Sigmoid colon (tissue), 7 donors: ENCODE measurements at regions of chr17 and their contacts with region 1.

Region 1: DNA sequence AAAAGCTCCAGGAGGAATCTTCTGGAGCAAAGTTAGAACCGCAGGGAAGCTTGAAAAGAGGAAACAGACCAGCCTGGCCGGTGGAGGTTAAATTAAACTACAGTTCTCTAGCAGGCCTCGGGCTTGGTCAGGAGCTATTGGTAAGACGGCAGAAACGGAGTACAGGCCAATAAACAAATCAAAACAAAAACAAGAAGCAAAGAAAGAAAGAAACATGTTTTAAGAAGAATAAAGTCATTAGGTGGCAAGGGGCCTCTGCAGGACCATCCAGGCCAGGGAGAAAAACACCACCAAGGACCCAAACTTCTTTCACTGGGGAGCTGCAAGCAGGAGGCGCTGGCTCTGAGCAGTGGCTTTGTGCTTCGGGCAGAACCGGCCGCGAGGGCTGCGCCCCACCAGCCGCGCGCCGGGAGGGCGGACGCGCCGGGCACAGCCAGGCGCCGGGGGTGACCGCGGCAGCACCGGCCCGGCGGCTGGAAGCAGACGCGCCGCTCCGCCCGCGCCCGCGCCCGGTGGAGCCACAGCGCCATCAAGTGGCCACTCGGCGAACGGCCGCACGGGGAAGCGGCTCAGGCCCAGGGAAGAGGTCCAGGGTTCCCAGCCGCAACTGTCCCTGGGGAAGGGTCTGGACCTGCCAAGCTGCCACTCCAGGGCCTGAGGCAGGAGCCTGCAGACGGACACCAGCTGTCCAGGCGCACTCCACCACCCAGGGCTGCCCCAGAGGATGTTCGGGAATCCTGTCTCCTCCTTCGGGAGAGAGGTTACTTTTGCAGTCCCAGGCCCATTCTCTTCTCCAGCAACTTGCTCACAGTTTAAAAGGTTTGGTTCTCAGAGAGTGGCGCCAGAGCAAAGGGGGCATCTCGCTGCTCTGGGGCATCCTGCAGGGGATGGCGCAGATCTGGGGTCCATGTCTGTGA is 419.4 kb downstream of the SOX9 start:
- DNase-seq: peak; percentile 77
- H3K4me3 ChIP-seq: peak overlapping the region in 2 of 4 donors; percentile 23 to 31
- H3K27ac ChIP-seq: no peak overlapping the region
- H3K4me1 ChIP-seq: peaks cover 0 to 10% (median 2%) of the 10 kb centered on the region in 4 donors
- H3K27me3 ChIP-seq: peaks cover 0 to 5% (median 0%) of the 10 kb centered on the region in 3 donors
- CTCF ChIP-seq: peak; percentile 69 to 89 (median 74)
- EP300 ChIP-seq: no peak
- POLR2A ChIP-seq: no peak

Region 2: DNA sequence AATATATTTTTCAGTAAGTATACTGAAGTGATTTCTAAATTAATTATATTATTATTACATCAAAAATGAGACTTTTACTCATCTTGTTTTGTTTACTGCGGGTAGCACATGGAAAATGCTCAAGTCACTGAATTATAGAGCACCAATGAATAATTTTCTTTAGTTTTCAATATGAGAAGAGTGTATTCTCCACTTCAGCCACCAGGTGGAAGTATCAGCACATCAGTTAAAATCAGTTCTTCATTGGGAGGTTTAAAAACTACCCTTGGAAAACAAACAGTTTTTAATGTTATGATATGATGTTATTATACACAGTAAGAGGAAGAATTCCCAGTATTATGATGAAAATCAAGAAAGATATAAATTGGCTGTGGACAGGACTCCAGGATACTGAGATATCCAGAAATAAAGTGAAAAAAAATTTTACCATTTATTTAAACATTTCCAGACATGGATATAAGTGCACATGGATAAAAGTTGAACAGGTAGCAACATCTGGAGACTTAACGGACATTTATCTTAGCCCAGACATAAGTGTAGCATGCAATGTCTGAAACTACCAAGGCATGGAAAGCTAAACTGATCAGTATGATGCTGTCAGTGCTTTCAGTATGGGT is 1903.6 kb before region 1 on chr17:
- intact Hi-C with region 1: loop called (anchors 2 kb)
- DNase-seq: no peak
- H3K4me3 ChIP-seq: no peak overlapping the region
- H3K27ac ChIP-seq: no peak overlapping the region
- H3K4me1 ChIP-seq: no peaks in the 10 kb centered on the region
- H3K27me3 ChIP-seq: no peaks in the 10 kb centered on the region
- CTCF ChIP-seq: peak; percentile 65 to 85 (median 78)
- EP300 ChIP-seq: no peak
- POLR2A ChIP-seq: no peak

Region 3: GRCh38 chr17:70767102-70767701 is 1773.0 kb before region 1 on chr17:
- intact Hi-C with region 1: loop called (anchors 1 kb)
- DNase-seq: no peak
- H3K4me3 ChIP-seq: no peak overlapping the region
- H3K27ac ChIP-seq: no peak overlapping the region
- H3K4me1 ChIP-seq: peaks cover 0 to 3% (median 0%) of the 10 kb centered on the region in 4 donors
- H3K27me3 ChIP-seq: no peaks in the 10 kb centered on the region
- CTCF ChIP-seq: peak; percentile 34 to 57 (median 48)
- EP300 ChIP-seq: no peak
- POLR2A ChIP-seq: no peak

Region 4: DNA sequence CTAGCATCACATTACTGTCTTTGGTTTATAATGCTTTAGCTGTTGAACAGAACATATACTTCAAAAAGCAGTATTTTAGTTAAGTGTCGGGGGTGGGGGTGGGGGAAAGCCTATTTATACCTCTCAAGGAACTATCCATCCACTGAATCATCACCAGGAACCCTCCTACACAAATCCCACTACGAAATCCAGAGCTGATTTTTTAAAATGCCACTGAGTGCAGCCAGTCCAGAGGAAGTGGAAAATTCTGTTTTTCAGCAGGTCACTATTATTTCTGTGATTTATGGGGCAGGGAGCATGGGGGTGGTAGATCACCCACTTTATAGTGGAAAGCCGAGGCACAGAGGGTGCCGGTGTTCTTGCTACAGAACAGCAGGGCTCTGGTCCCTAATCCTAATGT is 135.4 kb before region 1 on chr17:
- intact Hi-C with region 1: no loop called
- DNase-seq: no peak
- H3K4me3 ChIP-seq: no peak overlapping the region
- H3K27ac ChIP-seq: no peak overlapping the region
- H3K4me1 ChIP-seq: peaks cover 0 to 25% (median 20%) of the 10 kb centered on the region in 4 donors
- H3K27me3 ChIP-seq: no peaks in the 10 kb centered on the region
- CTCF ChIP-seq: no peak
- EP300 ChIP-seq: no peak
- POLR2A ChIP-seq: no peak

Region 5: GRCh38 chr17:72488551-72489244 is 51.5 kb before region 1 on chr17:
- intact Hi-C with region 1: no loop called
- DNase-seq: no peak
- H3K4me3 ChIP-seq: no peak overlapping the region
- H3K27ac ChIP-seq: no peak overlapping the region
- H3K4me1 ChIP-seq: no peaks in the 10 kb centered on the region
- H3K27me3 ChIP-seq: peaks cover 0 to 7% (median 0%) of the 10 kb centered on the region in 3 donors
- CTCF ChIP-seq: no peak
- EP300 ChIP-seq: no peak
- POLR2A ChIP-seq: no peak

Region 6: GRCh38 chr17:72665852-72666851 is 125.9 kb after region 1 on chr17:
- intact Hi-C with region 1: no loop called
- DNase-seq: peak; percentile 34
- H3K4me3 ChIP-seq: no peak overlapping the region
- H3K27ac ChIP-seq: no peak overlapping the region
- H3K4me1 ChIP-seq: no peaks in the 10 kb centered on the region
- H3K27me3 ChIP-seq: no peaks in the 10 kb centered on the region
- CTCF ChIP-seq: no peak
- EP300 ChIP-seq: no peak
- POLR2A ChIP-seq: no peak

Region 7: DNA sequence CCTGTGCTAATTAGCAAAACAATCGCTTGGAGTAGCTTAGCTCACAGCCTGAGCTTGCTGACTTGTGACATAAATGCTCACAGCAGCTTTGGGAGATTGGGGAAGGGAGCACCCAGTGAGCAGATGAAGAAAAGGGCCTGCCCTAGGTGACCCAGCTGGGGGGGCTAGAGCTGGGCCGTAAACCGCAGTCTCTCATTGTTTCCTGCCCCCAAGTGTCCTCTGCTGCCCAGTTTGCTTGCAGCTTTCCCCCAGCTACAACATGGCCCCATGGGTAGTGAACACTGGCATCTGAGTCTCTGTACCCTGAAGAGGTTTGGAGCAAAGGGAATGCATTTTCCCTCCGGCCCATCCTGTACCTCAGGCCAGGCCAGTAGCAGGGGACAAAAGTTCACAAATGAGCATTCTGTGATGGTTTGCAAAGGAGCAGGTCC is 202.8 kb after region 1 on chr17:
- intact Hi-C with region 1: no loop called
- DNase-seq: no peak
- H3K4me3 ChIP-seq: no peak overlapping the region
- H3K27ac ChIP-seq: no peak overlapping the region
- H3K4me1 ChIP-seq: no peaks in the 10 kb centered on the region
- H3K27me3 ChIP-seq: no peaks in the 10 kb centered on the region
- CTCF ChIP-seq: no peak
- EP300 ChIP-seq: no peak
- POLR2A ChIP-seq: no peak